Spleen (tissue), 13 donors: ENCODE measurements at regions of chr17 and their contacts with region 1.

Region 1: GRCh38 chr17:30969989-30970830 is 629 bp upstream of the RNF135 start:
- DNase-seq: no peak
- H3K4me3 ChIP-seq: peak overlapping the region; percentile 53 to 79 (median 66)
- H3K27ac ChIP-seq: peak overlapping the region; percentile 94 to 100 (median 98)
- H3K4me1 ChIP-seq: peaks cover 13 to 76% (median 58%) of the 10 kb centered on the region in 6 donors
- H3K27me3 ChIP-seq: no peaks in the 10 kb centered on the region
- CTCF ChIP-seq: no peak
- POLR2A ChIP-seq: peak in 1 of 3 donors; percentile 28

Region 2: DNA sequence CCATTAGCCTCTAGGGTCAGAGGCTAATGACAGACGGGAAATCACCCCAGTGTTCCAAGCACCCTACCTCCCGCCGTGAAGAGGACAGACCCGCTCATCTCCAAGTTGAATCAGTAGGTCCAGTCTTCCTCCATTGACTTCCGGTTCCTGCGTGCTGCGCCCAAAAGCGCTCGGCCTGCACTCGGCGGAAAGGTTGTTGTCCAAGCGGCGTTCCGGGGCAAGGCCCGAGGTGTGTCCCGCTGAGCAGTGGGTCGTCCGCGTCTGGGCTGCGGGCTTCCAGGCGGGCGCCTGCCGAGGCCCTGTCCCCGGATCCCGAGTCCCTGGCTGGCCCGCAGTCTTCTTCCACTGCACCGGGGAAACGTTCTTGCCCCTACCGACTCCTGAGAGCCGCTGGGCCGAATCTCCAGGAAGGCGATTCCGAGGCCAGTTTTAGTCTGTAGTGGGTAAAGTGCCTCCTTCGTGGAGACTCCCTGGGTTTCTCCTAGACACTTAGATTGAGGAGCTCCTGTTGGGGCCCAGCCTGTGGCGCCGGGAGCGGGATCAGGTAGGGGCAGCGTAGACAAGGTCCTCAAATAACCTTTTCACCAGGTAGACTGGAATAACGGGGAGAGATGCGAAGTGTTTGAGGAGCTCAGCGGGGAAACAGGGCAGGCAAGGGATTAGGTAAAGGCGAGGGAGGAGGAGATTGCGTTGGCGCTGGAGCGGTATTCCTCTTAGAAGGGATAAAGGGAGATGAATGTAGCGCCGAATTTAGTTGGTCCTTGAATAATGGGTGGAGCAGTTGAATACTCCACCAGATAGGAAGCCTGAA is 63.9 kb before region 1 on chr17 and contains the start of gene TEFM:
- intact Hi-C with region 1: loop called (anchors 5 kb)
- DNase-seq: peak; percentile 96
- H3K4me3 ChIP-seq: peak within 1 kb of the TSS; percentile 65 to 90 (median 70)
- H3K27ac ChIP-seq: peak within 1 kb of the TSS; percentile 82 to 93 (median 86)
- H3K4me1 ChIP-seq: peaks cover 15 to 69% (median 34%) of the 10 kb centered on the region in 6 donors
- H3K27me3 ChIP-seq: no peaks in the 10 kb centered on the region
- CTCF ChIP-seq: peak in 2 of 11 experiments; percentile 15 to 21
- POLR2A ChIP-seq: peak in 2 of 3 donors; percentile 7 to 80
- total RNA-seq, gene TEFM: 16.0 to 33.4 (median 18.0) TPM

Region 3: DNA sequence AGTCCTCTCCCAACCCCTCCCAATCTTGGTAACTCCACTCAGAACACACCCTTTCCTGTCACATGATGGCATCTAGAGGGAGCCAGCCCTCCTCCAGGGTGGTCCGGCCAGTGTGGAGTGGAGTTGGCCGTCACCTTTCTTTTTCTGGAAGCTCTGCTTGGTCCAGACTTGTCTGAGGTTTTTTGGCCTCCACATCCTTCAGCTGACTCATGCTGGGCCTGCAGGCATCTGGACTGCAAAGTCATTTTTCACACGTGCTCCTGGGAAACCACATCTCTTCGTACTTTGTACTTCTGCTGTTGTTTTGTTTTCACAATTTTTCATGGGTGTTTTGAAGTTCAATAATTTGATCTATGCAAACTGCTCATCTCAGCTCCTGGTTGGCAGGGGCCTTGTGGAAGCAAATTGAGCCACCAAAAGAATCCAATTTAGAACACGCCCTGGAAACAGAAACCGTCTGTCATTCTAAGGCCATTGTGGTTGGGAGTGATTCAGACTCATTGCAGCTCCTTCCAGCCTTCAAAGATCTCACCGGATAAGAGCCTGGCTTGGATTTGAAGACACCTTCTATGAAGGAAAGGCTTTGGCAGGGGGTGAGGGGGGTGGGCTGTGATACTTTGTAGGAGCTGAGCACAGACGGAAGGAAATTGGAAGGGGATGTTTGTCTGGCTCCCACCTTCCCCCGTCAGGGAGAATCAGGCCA is 82.1 kb after region 1 on chr17:
- intact Hi-C with region 1: no loop called
- DNase-seq: no peak
- H3K4me3 ChIP-seq: no peak overlapping the region
- H3K27ac ChIP-seq: peak overlapping the region in 5 of 8 donors; percentile 27 to 77 (median 74)
- H3K4me1 ChIP-seq: peaks cover 0 to 22% (median 8%) of the 10 kb centered on the region in 6 donors
- H3K27me3 ChIP-seq: no peaks in the 10 kb centered on the region
- CTCF ChIP-seq: no peak
- POLR2A ChIP-seq: no peak